Activated naive CD4-positive, alpha-beta T cell treated with anti-CD3 and anti-CD28 coated beads for 36 hours (primary cell): ENCODE measurements at regions of chr7 and their contacts with region 1.

Region 1: GRCh38 chr7:100478966-100479665 is at the start of gene TSC22D4:
- DNase-seq: peak; percentile 93
- H3K4me3 Mint-ChIP-seq: peak within 1 kb of the TSS; percentile 98
- H3K27ac Mint-ChIP-seq: peak within 1 kb of the TSS; percentile 92
- H3K4me1 Mint-ChIP-seq: peaks cover 42% of the 10 kb centered on the region
- H3K27me3 Mint-ChIP-seq: no peaks in the 10 kb centered on the region
- total RNA-seq, gene TSC22D4: 46.0 to 48.7 TPM

Region 2: DNA sequence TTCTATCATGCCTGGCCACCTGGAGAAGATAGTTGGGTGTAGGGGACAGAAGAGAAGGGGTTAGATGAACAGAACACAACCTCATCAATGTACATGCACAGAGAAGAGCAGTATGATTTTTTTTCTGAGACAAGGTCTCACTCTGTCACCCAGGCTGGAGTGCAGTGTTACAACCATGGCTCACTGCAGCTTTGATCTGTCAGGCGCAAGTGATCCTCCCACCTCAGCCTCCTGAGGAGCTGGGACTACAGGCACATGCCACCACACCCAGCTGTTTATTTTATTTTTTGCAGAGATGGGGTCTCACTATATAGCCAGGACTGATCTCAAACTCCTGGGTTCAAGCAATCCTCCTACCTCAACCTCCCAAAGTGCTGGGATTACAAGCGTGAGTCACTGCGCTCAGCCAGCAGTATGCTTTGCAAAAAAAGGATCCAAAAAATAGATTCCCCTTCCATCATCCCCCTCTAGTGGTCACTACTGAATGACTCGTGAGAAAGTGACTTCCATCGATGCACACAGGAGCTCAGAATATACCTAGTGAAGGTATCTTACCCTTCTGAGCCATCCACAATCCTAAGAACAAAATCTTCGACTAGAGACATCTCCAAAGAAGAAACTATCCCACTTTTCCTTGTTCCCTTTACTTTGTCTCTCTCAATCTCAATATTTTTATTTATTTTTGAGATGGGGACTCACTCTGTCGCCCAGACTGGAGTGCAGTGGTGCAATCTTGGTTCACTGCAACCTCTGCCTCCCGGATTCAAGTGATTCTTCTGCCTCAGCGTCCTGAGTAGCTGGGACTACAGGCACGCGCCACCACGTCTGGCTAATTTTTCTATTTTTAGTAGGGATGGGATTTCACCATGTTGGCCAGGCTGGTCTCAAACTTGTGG is 71.6 kb before region 1 on chr7:
- CTCF ChIA-PET with region 1: no interaction called
- intact Hi-C with region 1: no loop called
- DNase-seq: peak; percentile 61
- H3K4me3 Mint-ChIP-seq: no peak overlapping the region
- H3K27ac Mint-ChIP-seq: no peak overlapping the region
- H3K4me1 Mint-ChIP-seq: peaks cover 2% of the 10 kb centered on the region
- H3K27me3 Mint-ChIP-seq: no peaks in the 10 kb centered on the region

Region 3: GRCh38 chr7:100435401-100436304 is 43.5 kb before region 1 on chr7:
- CTCF ChIA-PET with region 1: interaction called, 3 read pairs
- intact Hi-C with region 1: loop called (anchors 1 kb)
- DNase-seq: peak; percentile 62
- H3K4me3 Mint-ChIP-seq: peak overlapping the region; percentile 94
- H3K27ac Mint-ChIP-seq: peak overlapping the region; percentile 97
- H3K4me1 Mint-ChIP-seq: peaks cover 52% of the 10 kb centered on the region
- H3K27me3 Mint-ChIP-seq: no peaks in the 10 kb centered on the region

Region 4: DNA sequence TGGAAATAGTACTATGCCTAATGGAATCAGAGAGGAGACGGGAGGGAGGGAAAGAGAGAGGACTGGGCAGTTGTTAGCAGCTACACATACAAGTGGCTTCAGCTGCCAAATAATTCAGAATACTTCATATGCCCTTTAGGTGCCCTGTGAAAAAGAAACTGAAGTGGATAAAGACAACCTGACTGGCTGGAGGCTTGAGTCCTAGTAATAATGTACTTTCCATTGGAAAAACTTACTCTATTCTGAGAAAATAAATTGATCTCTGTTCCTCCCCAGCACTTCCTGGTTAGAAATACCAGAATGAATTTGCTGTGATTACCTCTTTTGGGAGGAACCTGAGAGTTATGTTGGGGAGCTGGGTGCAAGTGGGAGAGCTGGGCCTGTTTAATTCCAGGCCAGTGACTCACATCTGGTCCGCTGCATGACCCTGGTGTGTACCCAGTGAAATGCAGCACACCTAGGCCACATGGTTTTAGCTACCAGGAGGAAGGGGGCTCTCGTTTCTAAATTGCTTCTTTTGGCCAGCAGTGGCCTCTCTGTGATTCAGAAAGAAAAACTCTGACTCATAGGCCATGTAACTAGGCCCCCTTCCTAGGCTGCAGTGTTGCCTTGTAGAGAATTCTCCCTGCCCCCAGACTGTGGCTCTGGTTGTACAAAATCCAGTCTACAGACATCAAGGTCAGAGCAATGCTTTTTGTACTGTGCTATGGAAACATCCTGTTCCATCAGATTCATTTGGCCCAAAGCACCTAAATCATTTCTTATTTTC is 66.4 kb after region 1 on chr7:
- CTCF ChIA-PET with region 1: interaction called, 9 read pairs
- intact Hi-C with region 1: loop called (anchors 2 kb)
- DNase-seq: peak; percentile 76
- H3K4me3 Mint-ChIP-seq: peak overlapping the region; percentile 59
- H3K27ac Mint-ChIP-seq: peak overlapping the region; percentile 95
- H3K4me1 Mint-ChIP-seq: peaks cover 94% of the 10 kb centered on the region
- H3K27me3 Mint-ChIP-seq: no peaks in the 10 kb centered on the region

Region 5: DNA sequence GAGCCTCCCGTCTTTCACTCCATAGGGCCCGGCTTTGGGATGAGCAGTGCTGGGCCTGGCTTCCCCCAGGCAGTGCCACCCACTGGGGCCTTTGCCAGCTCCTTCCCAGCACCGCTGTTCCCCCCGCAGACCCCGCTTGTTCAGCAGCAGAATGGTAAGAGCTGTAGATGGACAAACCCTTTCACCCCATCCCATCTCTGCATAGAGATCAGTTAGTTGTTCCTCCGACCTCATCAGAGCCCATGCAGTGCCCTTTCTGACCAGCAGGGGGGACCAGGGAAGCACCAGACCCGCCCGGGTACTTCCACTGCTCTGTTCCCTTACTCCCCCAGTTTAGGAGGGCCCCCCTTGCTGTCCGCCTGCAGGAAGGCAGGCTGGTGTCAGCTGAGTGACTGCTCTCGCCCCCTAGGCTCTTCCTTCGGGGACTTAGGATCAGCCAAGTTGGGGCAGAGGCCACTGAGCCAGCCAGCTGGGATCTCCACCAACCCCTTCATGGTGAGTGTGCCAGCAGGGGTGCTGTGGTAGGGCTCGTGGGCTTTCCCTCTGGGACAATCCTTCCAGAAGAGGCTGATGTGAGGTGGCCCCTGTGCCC is 84.8 kb after region 1 on chr7:
- CTCF ChIA-PET with region 1: interaction called, 23 read pairs
- intact Hi-C with region 1: loop called (anchors 1 kb)
- DNase-seq: peak; percentile 90
- H3K4me3 Mint-ChIP-seq: no peak overlapping the region
- H3K27ac Mint-ChIP-seq: no peak overlapping the region
- H3K4me1 Mint-ChIP-seq: peaks cover 15% of the 10 kb centered on the region
- H3K27me3 Mint-ChIP-seq: no peaks in the 10 kb centered on the region

Region 6: GRCh38 chr7:100626530-100627237 is 147.6 kb after region 1 on chr7:
- CTCF ChIA-PET with region 1: no interaction called
- intact Hi-C with region 1: no loop called
- DNase-seq: peak; percentile 91
- H3K4me3 Mint-ChIP-seq: peak overlapping the region; percentile 66
- H3K27ac Mint-ChIP-seq: peak overlapping the region; percentile 24
- H3K4me1 Mint-ChIP-seq: peaks cover 24% of the 10 kb centered on the region
- H3K27me3 Mint-ChIP-seq: no peaks in the 10 kb centered on the region

Region 7: GRCh38 chr7:100852048-100852872 is 373.1 kb after region 1 on chr7 and contains the start of gene SLC12A9:
- CTCF ChIA-PET with region 1: no interaction called
- intact Hi-C with region 1: loop called (anchors 2 kb)
- DNase-seq: peak; percentile 89
- H3K4me3 Mint-ChIP-seq: peak within 1 kb of the TSS; percentile 89
- H3K27ac Mint-ChIP-seq: peak within 1 kb of the TSS; percentile 50
- H3K4me1 Mint-ChIP-seq: peaks cover 18% of the 10 kb centered on the region
- H3K27me3 Mint-ChIP-seq: no peaks in the 10 kb centered on the region
- total RNA-seq, gene SLC12A9: 10.1 to 10.5 TPM